ENCODE measurements at regions of chr3 and their contacts with region 1.

Region 1: GRCh38 chr3:115903843-115904242 is 280.5 kb downstream of the GAP43 start:
- DNase-seq: no peak

Region 2: GRCh38 chr3:115720983-115721382 is 182.9 kb before region 1 on chr3:
- intact Hi-C with region 1: no loop called
- DNase-seq: no peak

Region 3: DNA sequence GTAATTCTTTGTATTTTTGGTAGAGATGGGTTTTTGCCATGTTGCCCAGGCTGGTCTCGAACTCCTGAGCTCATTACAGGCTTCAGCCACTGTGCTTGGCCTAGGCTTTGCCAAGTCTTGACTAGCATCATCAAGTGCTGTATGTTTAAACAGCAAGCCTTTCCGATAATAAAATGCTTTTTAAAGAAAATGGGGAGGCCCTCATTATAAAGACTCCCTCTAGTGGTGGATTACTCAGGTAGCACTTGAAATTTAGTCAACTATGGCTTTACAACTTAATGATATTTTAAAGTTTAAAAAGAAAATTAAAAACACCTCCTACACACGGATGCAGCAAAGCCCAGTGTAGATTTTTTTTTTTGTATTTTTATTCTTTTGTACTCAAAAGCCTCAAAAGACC is 66.9 kb before region 1 on chr3:
- intact Hi-C with region 1: loop called (anchors 10 kb)
- DNase-seq: no peak